K562 (cell line): ENCODE measurements at regions of chr22 and their contacts with region 1.

Region 1: GRCh38 chr22:23913661-23914353 is 19.6 kb downstream of the MIF start:
- DNase-seq: peak; percentile 86 to 93 (median 89)
- ATAC-seq: peak; percentile 99
- H3K4me3 ChIP-seq: peak overlapping the region; percentile 43
- H3K27ac ChIP-seq: peak overlapping the region; percentile 74
- H3K4me1 ChIP-seq: no peaks in the 10 kb centered on the region
- H3K27me3 ChIP-seq: no peaks in the 10 kb centered on the region
- CTCF ChIP-seq: no peak
- EP300 ChIP-seq: no peak
- POLR2A ChIP-seq: peak; percentile 79
- RAD21 ChIP-seq: no peak

Region 2: DNA sequence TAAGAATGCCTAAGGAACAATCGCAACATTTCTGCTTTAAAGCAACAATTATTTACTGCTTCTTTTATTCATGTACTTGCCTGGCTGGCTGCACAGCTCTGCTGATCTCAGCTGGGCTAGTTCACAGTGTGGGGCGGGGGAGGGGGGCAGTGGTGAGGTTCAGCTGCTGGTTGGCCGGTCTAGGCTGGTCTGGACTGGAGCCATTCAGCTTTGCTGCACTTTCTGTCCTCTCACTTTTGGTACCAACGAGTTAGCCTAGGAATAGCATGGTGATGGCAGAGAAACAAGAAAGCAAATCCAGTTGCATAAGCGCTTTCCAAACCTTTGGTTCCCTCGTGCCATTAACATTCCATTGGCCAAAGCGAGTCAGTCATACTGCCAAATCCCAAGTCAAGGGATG is 35.6 kb before region 1 on chr22:
- CTCF ChIA-PET with region 1: no interaction called
- POLR2A ChIA-PET with region 1: no interaction called
- in situ Hi-C with region 1: no loop called
- intact Hi-C with region 1: no loop called
- DNase-seq: peak in 2 of 4 experiments; percentile 13 to 23
- ATAC-seq: no peak
- H3K4me3 ChIP-seq: no peak overlapping the region
- H3K27ac ChIP-seq: no peak overlapping the region
- H3K4me1 ChIP-seq: peaks cover 0 to 5% of the 10 kb centered on the region in 2 experiments; a peak in 2 of 5 replicates
- H3K27me3 ChIP-seq: no peaks in the 10 kb centered on the region
- CTCF ChIP-seq: no peak
- EP300 ChIP-seq: no peak
- POLR2A ChIP-seq: no peak
- RAD21 ChIP-seq: no peak

Region 3: DNA sequence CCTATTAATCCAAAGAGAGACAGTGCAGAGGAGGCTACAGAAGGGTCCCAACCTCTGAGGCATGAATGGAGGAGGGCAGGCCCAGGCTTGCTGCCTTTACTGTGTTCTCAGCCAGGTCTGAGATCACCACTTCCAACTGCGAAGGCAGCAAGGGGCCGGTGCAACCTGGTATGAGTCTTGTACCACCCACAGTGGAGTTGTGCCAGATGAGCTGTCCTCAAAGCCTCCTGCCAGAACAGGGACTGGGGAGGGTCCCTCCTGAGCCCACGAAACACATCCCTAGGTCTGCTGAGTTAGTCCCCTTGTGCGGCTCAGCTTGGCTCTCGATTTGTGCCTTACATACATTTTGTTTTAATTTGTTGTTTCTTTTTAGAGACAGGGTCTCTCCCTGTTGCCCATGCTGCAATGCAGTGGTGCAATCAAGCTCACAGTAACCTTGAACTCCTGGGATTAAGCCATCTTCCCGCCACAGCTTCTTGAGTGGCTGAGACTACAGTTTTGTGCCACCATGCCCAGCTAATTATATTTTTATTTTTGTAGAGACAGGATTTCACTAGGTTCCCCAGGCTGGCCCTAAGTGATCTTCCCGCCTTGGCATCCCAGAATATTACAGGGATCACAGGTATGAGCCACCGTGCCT is 10.4 kb before region 1 on chr22:
- CTCF ChIA-PET with region 1: no interaction called
- POLR2A ChIA-PET with region 1: interaction called, 13 read pairs
- in situ Hi-C with region 1: no loop called
- intact Hi-C with region 1: no loop called
- DNase-seq: no peak
- ATAC-seq: no peak
- H3K4me3 ChIP-seq: no peak overlapping the region
- H3K27ac ChIP-seq: no peak overlapping the region
- H3K4me1 ChIP-seq: peaks cover 4 to 10% of the 10 kb centered on the region in 2 experiments
- H3K27me3 ChIP-seq: no peaks in the 10 kb centered on the region
- CTCF ChIP-seq: no peak
- EP300 ChIP-seq: no peak
- POLR2A ChIP-seq: no peak
- RAD21 ChIP-seq: no peak

Region 4: GRCh38 chr22:24001314-24001713 is 87.5 kb after region 1 on chr22:
- CTCF ChIA-PET with region 1: no interaction called
- POLR2A ChIA-PET with region 1: no interaction called
- in situ Hi-C with region 1: no loop called
- intact Hi-C with region 1: no loop called
- DNase-seq: peak in 1 of 4 experiments; percentile 9
- ATAC-seq: no peak
- H3K4me3 ChIP-seq: no peak overlapping the region
- H3K27ac ChIP-seq: no peak overlapping the region
- H3K4me1 ChIP-seq: peaks cover 0 to 7% of the 10 kb centered on the region in 2 experiments; a peak in 2 of 5 replicates
- H3K27me3 ChIP-seq: no peaks in the 10 kb centered on the region
- CTCF ChIP-seq: no peak
- EP300 ChIP-seq: no peak
- POLR2A ChIP-seq: no peak
- RAD21 ChIP-seq: no peak